ENCODE measurements at regions of chr1 and their contacts with region 1.

Region 1: GRCh38 chr1:16944038-16944437 is 22.3 kb downstream of the CROCC start:
- DNase-seq: peak in 1 of 5 donors; percentile 80
- H3K4me3 ChIP-seq: no peak overlapping the region
- H3K27ac ChIP-seq: no peak overlapping the region
- H3K4me1 ChIP-seq: no peaks in the 10 kb centered on the region
- H3K27me3 ChIP-seq: no peaks in the 10 kb centered on the region
- CTCF ChIP-seq: no peak

Region 2: GRCh38 chr1:16618719-16619118 is 325.3 kb before region 1 on chr1:
- intact Hi-C with region 1: loop called (anchors 5 kb)
- DNase-seq: peak in 2 of 5 donors; percentile 77 to 88
- H3K4me3 ChIP-seq: no peak overlapping the region
- H3K27ac ChIP-seq: no peak overlapping the region
- H3K4me1 ChIP-seq: peaks cover 0 to 3% (median 1%) of the 10 kb centered on the region in 3 donors
- H3K27me3 ChIP-seq: no peaks in the 10 kb centered on the region
- CTCF ChIP-seq: no peak

Region 3: GRCh38 chr1:17075470-17076255 is 131.6 kb after region 1 on chr1:
- intact Hi-C with region 1: no loop called
- DNase-seq: no peak
- H3K4me3 ChIP-seq: no peak overlapping the region
- H3K27ac ChIP-seq: no peak overlapping the region
- H3K4me1 ChIP-seq: no peaks in the 10 kb centered on the region
- H3K27me3 ChIP-seq: no peaks in the 10 kb centered on the region
- CTCF ChIP-seq: no peak

Measured in kidney (tissue), 22 donors.